ENCODE measurements at regions of chr9 and their contacts with region 1.

Region 1: GRCh38 chr9:9033022-9033421 is 1233.4 kb upstream of the DMAC1 start:
- DNase-seq: no peak
- H3K4me3 ChIP-seq: no peak overlapping the region
- H3K27ac ChIP-seq: no peak overlapping the region
- H3K4me1 ChIP-seq: no peaks in the 10 kb centered on the region
- H3K27me3 ChIP-seq: no peaks in the 10 kb centered on the region
- CTCF ChIP-seq: no peak
- EP300 ChIP-seq: no peak
- POLR2A ChIP-seq: no peak

Region 2: DNA sequence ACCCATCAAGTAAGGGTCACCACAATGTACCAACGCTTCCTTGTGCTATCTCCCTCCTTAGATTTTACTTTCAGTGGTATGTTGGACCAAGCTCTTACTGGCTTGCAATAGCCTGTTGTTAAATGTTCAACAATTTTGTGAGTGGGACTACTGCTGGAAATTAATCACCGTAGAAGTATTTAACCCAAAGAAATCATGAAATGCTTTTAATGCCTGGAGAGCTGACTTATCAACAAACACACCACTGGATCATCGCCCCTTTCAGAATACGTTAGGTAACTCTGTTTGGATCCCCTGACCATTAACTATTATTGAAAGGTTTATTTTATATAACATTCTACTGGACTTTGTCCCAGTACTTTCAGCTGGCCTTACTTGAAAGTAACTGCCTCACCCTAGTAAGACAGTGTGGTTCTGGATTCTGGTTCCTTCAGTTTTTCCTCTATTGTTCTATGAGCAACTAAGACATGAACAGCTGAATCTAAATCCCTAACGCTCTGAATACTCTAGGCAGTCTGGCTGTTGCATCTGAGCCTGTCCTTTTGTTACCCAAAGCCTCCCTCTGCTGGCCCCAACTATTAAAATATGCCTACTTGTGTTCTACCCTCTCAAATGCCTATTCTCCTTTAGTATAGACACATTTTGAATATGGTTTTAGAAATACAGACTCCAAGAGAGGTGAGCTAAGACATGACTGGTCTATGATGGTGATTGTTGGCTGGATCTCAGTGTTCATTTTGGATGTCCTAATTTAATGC is 30.0 kb before region 1 on chr9:
- intact Hi-C with region 1: loop called in 1 of 4 experiments (anchors 5 kb)
- DNase-seq: peak in 2 of 5 donors; percentile 13 to 27
- H3K4me3 ChIP-seq: no peak overlapping the region
- H3K27ac ChIP-seq: no peak overlapping the region
- H3K4me1 ChIP-seq: no peaks in the 10 kb centered on the region
- H3K27me3 ChIP-seq: no peaks in the 10 kb centered on the region
- CTCF ChIP-seq: peak in 1 of 3 donors; percentile 18
- EP300 ChIP-seq: no peak
- POLR2A ChIP-seq: no peak

Measured in ovary (tissue), 10 donors.